ENCODE measurements at regions of chr14 and their contacts with region 1.

Region 1: GRCh38 chr14:91985521-91986255 is 38.2 kb upstream of the FBLN5 start:
- DNase-seq: no peak
- ATAC-seq: no peak

Region 2: GRCh38 chr14:91911474-91912032 is 74.1 kb before region 1 on chr14:
- intact Hi-C with region 1: no loop called
- DNase-seq: no peak
- ATAC-seq: peak; percentile 75

Region 3: GRCh38 chr14:91947471-91948184 is 38.1 kb before region 1 on chr14 and contains the start of gene FBLN5:
- intact Hi-C with region 1: loop called (anchors 2 kb)
- DNase-seq: peak; percentile 83
- ATAC-seq: peak; percentile 92
- total RNA-seq, gene FBLN5: 70.5 TPM

Measured in Right ventricle myocardium superior (tissue), 1 donor.